Prostate gland (tissue), 2 donors: ENCODE measurements at regions of chr1 and their contacts with region 1.

Region 1: GRCh38 chr1:108125312-108126138 is 74.6 kb downstream of the SLC25A24 start:
- DNase-seq: peak; percentile 76
- H3K4me3 ChIP-seq: no peak overlapping the region
- H3K27ac ChIP-seq: peak overlapping the region; percentile 65 to 68
- H3K4me1 ChIP-seq: no peaks in the 10 kb centered on the region
- H3K27me3 ChIP-seq: no peaks in the 10 kb centered on the region
- CTCF ChIP-seq: peak; percentile 80 to 98 (median 92)
- POLR2A ChIP-seq: no peak

Region 2: GRCh38 chr1:107782217-107782845 is 343.2 kb before region 1 on chr1:
- intact Hi-C with region 1: loop called (anchors 1 kb)
- DNase-seq: peak; percentile 57
- H3K4me3 ChIP-seq: no peak overlapping the region
- H3K27ac ChIP-seq: peak overlapping the region; percentile 69 to 75
- H3K4me1 ChIP-seq: peaks cover 7% of the 10 kb centered on the region
- H3K27me3 ChIP-seq: no peaks in the 10 kb centered on the region
- CTCF ChIP-seq: peak; percentile 64 to 94 (median 86)
- POLR2A ChIP-seq: no peak